Spleen (tissue), 13 donors: ENCODE measurements at regions of chr17 and their contacts with region 1.

Region 1: DNA sequence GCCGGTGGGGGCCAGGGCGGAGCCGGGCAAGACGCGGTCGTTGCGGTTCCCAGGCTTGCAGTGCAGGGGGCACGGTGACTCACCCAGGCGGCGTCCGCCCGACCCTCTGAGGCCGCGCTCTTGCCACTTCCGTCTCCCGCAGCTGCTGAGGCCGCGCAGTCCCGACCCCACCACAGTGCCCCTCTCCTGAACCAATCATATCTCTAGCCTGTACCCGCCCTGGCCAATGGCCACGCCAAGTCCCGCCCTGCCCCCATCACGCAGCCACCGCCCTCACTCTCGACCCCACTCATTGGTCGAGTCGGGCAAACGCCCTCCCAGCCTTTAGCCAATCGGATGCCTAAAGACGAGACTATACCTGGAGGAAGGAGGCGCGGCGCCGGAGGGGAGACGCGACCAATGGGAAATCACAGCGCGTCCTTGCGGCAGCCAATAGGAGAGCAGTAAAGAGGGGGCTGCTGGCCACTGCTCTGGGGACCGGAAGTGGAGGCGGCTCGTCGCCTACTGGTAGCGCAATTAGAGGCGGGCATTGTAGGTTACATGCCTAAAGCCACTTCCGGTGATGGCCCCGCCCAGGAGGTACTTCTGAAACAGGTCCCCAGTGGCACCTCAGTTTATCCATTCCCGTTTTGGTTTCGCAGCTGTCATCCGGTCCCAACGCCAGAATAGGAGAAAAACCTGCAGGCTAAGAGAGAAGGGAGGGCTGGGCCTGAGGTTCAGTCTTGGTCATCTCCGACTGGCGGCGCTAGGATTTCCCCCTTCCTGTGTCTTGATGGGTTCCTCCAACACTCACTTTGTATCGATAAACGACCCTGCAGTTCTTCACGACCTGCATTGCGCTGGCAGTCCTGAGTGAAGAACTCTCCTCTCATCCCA is 3.5 kb upstream of the MTMR4 start:
- DNase-seq: peak; percentile 99
- H3K4me3 ChIP-seq: peak overlapping the region; percentile 59 to 99 (median 80)
- H3K27ac ChIP-seq: peak overlapping the region; percentile 81 to 98 (median 94)
- H3K4me1 ChIP-seq: peaks cover 26 to 71% (median 63%) of the 10 kb centered on the region in 6 donors
- H3K27me3 ChIP-seq: no peaks in the 10 kb centered on the region
- CTCF ChIP-seq: peak in 1 of 11 experiments; percentile 23
- POLR2A ChIP-seq: peak in 2 of 3 donors; percentile 38 to 84

Region 2: GRCh38 chr17:58595326-58595725 is 77.4 kb after region 1 on chr17:
- intact Hi-C with region 1: no loop called
- DNase-seq: no peak
- H3K4me3 ChIP-seq: no peak overlapping the region
- H3K27ac ChIP-seq: no peak overlapping the region
- H3K4me1 ChIP-seq: no peaks in the 10 kb centered on the region
- H3K27me3 ChIP-seq: no peaks in the 10 kb centered on the region
- CTCF ChIP-seq: no peak
- POLR2A ChIP-seq: no peak

Region 3: GRCh38 chr17:58631523-58632323 is 113.8 kb after region 1 on chr17:
- intact Hi-C with region 1: loop called (anchors 5 kb)
- DNase-seq: peak; percentile 96
- H3K4me3 ChIP-seq: peak overlapping the region; percentile 7 to 64 (median 34)
- H3K27ac ChIP-seq: peak overlapping the region; percentile 85 to 93 (median 90)
- H3K4me1 ChIP-seq: peaks cover 5 to 26% (median 22%) of the 10 kb centered on the region in 6 donors
- H3K27me3 ChIP-seq: no peaks in the 10 kb centered on the region
- CTCF ChIP-seq: peak in 7 of 11 experiments; percentile 28 to 66 (median 44)
- POLR2A ChIP-seq: peak; percentile 80 to 99 (median 98)

Region 4: DNA sequence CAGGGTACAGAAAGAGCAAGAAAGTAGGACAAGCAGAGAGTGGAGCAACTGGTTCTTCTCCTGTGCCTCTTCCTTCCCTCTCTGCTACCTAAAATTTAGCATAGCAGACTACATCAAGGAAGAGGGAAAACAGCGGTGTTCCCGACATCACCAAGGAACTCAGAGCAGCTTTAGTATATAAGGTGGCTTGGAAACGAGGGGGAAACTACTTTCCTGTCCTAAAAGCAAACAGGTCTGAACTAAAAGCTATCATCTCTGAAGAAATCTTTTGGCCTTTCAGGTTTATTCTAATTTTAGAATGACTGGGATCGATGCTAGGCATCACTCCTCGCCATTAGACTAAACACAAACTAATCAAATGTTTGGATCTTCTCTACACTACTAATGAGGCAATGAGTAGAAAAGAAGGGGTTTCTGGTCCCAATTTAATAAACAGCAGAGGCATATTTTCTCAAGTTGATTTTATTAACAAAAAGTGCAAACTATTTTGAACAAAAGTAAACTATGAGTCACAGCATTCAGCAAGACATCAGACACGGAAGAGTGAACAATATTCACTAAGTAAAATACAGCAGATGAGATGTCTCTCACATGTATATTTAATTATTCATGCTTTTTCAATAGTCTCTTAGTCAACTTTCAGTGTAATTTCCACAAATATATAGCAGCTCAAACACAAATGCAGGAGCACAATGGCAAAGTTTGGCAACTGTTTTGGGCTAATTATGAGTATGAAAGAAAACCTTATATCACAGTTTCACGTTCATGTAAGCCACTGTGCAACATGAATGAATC is 480.0 kb after region 1 on chr17:
- intact Hi-C with region 1: loop called (anchors 5 kb)
- DNase-seq: no peak
- H3K4me3 ChIP-seq: no peak overlapping the region
- H3K27ac ChIP-seq: peak overlapping the region in 7 of 8 donors; percentile 56 to 89 (median 77)
- H3K4me1 ChIP-seq: peaks cover 0 to 73% (median 30%) of the 10 kb centered on the region in 6 donors
- H3K27me3 ChIP-seq: no peaks in the 10 kb centered on the region
- CTCF ChIP-seq: no peak
- POLR2A ChIP-seq: no peak